ENCODE measurements at regions of chr1 and their contacts with region 1.

Region 1: DNA sequence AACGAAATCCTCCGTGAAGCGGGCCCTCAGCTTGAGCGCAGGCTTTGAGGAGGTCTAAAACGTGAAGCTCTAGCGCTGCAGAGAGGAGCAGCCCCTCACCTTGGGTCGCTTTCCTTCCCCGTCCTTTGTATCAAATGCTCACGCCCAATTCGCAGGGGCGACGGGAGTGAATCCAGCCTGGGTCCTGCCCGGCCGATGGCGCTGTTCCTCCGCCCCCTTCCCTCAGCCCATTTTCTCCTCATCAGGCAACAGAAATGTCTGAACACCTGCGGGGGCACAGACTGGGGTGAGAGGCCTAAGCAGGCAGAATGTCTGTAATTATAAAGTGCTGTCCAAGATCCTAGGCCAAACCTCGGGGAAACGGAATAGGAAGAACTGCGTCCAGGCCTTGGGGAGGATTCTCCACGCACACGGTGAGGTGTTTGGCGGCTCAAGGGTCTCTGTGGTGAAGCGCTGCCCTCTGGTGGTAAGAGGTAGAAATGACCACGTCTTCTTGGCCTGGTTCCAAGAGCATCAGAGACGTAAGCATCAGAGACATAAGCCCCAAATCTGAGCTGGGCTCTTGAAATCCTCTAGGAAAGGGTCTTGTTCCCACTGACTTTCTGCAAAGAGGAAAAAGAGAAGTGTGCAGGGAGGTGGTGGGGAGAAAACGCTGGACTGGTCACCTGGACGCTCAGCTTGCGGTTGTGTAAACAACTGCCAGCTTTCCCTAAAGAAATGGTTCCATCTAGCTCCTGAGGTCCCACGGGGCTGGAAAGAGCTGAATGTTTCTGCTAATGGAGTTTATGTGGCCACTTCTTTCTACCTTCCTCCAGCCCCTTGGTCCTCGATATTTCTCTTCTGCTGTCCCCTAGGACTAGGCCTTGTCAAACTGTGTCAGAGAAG is 92.1 kb upstream of the CD53 start:
- DNase-seq: peak; percentile 81
- H3K4me3 ChIP-seq: no peak overlapping the region
- H3K27ac ChIP-seq: no peak overlapping the region
- H3K4me1 ChIP-seq: peaks cover 4% of the 10 kb centered on the region
- CTCF ChIP-seq: peak; percentile 92

Region 2: GRCh38 chr1:110433803-110434202 is 347.0 kb before region 1 on chr1:
- CTCF ChIA-PET with region 1: no interaction called
- POLR2A ChIA-PET with region 1: no interaction called
- intact Hi-C with region 1: no loop called
- DNase-seq: peak; percentile 34
- H3K4me3 ChIP-seq: no peak overlapping the region
- H3K27ac ChIP-seq: no peak overlapping the region
- H3K4me1 ChIP-seq: peaks cover 12% of the 10 kb centered on the region
- CTCF ChIP-seq: peak; percentile 23; the same call in 1 of the 2 replicates

Region 3: DNA sequence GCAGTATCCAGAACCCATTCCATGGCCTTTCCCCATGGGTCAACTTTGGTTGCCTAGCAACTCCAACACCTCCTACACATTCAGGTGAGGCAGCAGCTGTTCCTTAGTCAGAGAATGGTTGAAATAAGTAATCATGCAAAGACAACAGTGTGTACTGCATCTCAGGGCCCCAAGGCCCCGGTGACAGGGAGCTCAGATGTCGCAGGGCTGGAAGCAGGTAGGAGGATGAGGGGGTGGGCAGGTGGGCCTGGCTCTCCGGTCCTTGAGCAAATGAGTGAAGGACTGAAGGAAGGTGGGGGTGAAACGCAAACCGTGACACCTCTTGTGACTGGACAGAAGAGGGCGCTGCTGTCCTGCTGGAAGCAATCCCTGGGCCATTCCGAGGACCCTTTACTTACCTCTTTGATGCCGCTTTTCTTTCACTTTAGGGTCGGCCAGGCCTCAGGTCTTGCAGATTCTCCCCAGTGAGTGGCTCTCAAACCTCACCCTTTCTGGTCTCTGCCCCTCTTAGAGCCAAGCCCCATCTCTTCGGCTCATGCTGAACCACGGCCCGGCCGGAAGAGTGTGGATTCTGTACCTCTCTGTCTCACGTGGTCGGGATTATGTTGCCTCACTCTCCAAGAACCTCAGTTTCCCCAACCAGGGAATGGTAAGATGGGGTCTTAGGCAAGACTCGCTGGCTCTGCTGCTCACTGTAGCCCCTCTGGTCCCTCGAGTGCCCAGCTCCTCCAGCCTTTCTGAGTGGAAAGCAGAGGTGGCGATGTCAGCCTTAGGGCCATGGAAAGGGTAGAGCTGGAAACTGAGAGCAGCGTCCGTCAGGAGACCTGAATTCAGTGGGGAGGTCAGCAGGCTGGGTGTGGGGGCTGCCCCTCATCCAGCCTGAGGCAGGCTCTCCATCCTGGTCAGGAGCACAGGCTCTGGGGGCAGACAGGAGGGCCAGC is 256.3 kb before region 1 on chr1:
- CTCF ChIA-PET with region 1: interaction called, 6 read pairs
- POLR2A ChIA-PET with region 1: interaction called, 4 read pairs
- intact Hi-C with region 1: loop called (anchors 1 kb)
- DNase-seq: peak; percentile 61
- H3K4me3 ChIP-seq: no peak overlapping the region
- H3K27ac ChIP-seq: no peak overlapping the region
- H3K4me1 ChIP-seq: no peaks in the 10 kb centered on the region
- CTCF ChIP-seq: peak; percentile 84

Region 4: GRCh38 chr1:110630839-110631663 is 149.8 kb before region 1 on chr1:
- CTCF ChIA-PET with region 1: interaction called, 3 read pairs
- POLR2A ChIA-PET with region 1: interaction called, 3 read pairs
- intact Hi-C with region 1: loop called (anchors 1 kb)
- DNase-seq: peak; percentile 91
- H3K4me3 ChIP-seq: peak overlapping the region; percentile 32
- H3K27ac ChIP-seq: peak overlapping the region; percentile 86
- H3K4me1 ChIP-seq: peaks cover 79% of the 10 kb centered on the region
- CTCF ChIP-seq: peak; percentile 92

Region 5: DNA sequence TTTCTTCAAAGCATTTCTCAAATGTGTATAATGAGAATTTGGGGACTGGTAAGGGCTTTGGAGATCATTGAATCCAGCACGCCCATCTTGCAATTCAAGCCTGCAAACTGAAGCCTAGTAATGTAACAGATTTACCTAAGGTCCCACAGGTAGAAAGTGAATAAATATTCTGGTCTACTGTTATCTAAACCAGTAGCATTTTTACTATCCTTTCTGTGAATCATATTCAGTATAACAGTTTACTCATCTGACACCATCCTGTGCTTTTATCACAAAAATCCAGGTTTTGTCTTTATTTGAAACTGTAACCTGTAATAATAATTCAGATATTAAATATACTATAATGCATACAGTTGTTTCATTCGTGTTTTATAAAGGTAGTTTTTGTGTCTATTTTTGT is 123.5 kb before region 1 on chr1:
- CTCF ChIA-PET with region 1: no interaction called
- POLR2A ChIA-PET with region 1: no interaction called
- intact Hi-C with region 1: no loop called
- DNase-seq: no peak
- H3K4me3 ChIP-seq: no peak overlapping the region
- H3K27ac ChIP-seq: no peak overlapping the region
- H3K4me1 ChIP-seq: no peaks in the 10 kb centered on the region
- CTCF ChIP-seq: no peak

Region 6: DNA sequence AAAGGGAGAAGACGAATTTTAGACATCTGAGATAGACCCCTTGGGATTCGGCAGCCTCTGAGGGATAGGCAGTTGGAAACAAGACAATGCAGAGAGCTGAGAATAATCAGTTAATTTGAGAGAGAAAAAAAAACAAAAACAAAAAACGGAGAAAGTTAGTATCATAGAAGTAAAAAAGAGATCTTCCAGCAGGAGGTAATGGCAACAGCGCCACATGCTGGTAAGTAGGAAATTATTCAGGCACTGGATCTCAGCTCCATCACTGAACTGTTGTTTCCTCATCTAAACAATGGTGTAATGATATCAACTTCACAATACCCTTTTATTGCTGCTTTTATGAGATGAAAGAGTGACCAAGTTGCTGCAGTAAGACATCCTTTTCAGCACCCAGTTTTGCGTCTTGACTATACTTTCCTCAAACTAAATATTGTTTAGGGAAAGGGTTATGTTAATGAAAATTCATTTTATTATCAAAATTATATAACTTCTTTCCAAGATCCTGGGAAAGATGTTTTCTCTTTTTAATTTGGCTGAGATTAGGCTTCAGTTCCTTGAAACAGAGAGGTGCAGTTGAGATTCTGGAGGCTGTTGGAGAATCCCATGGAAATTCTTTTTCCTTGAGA is 14.7 kb before region 1 on chr1:
- CTCF ChIA-PET with region 1: interaction called, 11 read pairs
- POLR2A ChIA-PET with region 1: interaction called, 3 read pairs
- intact Hi-C with region 1: no loop called
- DNase-seq: peak; percentile 82
- H3K4me3 ChIP-seq: peak overlapping the region; percentile 24
- H3K27ac ChIP-seq: no peak overlapping the region
- H3K4me1 ChIP-seq: peaks cover 14% of the 10 kb centered on the region
- CTCF ChIP-seq: peak; percentile 99

Region 7: DNA sequence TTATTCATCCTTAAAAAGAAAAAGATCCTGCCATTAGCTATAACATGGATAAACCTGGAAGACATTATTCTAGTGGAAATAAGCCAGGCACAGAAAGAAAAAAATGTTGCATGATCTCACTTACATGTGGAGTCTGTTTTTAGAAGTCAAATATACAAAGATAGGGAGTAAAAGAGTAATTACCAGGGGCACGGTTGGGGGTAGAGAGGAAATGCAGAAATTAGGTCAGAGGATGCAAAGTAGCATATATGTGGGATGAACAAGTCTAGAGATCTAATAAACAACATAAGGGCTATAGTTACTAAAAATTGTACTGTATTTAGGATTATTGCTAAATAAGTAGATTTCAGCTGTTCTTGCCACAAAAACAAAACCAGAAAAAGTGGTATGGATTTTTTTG is 30.7 kb after region 1 on chr1:
- CTCF ChIA-PET with region 1: no interaction called
- POLR2A ChIA-PET with region 1: no interaction called
- intact Hi-C with region 1: no loop called
- DNase-seq: no peak
- H3K4me3 ChIP-seq: no peak overlapping the region
- H3K27ac ChIP-seq: no peak overlapping the region
- H3K4me1 ChIP-seq: peaks cover 4% of the 10 kb centered on the region
- CTCF ChIP-seq: no peak

Region 8: GRCh38 chr1:110880708-110881374 is 100.0 kb after region 1 on chr1:
- CTCF ChIA-PET with region 1: no interaction called
- POLR2A ChIA-PET with region 1: no interaction called
- intact Hi-C with region 1: no loop called
- DNase-seq: no peak
- H3K4me3 ChIP-seq: no peak overlapping the region
- H3K27ac ChIP-seq: peak overlapping the region; percentile 13
- H3K4me1 ChIP-seq: peaks cover 75% of the 10 kb centered on the region
- CTCF ChIP-seq: no peak

Region 9: DNA sequence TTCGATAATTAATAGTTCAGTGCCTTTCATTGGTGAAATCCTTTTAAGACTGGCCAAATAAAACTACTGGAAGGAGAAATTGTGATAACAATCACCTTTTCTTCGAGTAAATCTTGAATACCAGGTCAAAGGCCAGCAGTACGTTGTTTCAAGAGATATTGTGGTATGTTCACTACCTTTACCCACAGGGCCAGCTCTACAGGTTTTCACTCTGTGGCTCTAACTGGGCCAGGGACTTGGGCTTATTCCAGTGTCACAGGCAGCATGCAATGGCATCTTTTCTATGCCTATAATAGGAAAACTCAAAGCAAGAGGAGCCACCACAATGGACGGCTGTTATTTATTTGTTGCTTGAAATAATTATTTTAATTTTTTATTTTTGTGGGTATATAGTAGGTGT is 209.7 kb after region 1 on chr1:
- CTCF ChIA-PET with region 1: interaction called, 4 read pairs
- POLR2A ChIA-PET with region 1: interaction called, 3 read pairs
- intact Hi-C with region 1: loop called (anchors 1 kb)
- DNase-seq: no peak
- H3K4me3 ChIP-seq: no peak overlapping the region
- H3K27ac ChIP-seq: no peak overlapping the region
- H3K4me1 ChIP-seq: no peaks in the 10 kb centered on the region
- CTCF ChIP-seq: no peak

Region 10: GRCh38 chr1:111334169-111334568 is 553.3 kb after region 1 on chr1:
- CTCF ChIA-PET with region 1: no interaction called
- POLR2A ChIA-PET with region 1: no interaction called
- intact Hi-C with region 1: loop called (anchors 5 kb)
- DNase-seq: peak; percentile 74
- H3K4me3 ChIP-seq: no peak overlapping the region
- H3K27ac ChIP-seq: no peak overlapping the region
- H3K4me1 ChIP-seq: no peaks in the 10 kb centered on the region
- CTCF ChIP-seq: peak; percentile 95

Measured in OCI-LY7 (cell line).